Activated CD4-positive, alpha-beta T cell treated with anti-CD3 and anti-CD28 coated beads for 36 hours (primary cell): ENCODE measurements at regions of chr3 and their contacts with region 1.

Region 1: GRCh38 chr3:105827959-105828358 is 40.9 kb downstream of the CBLB start:
- DNase-seq: peak; percentile 36
- ATAC-seq: no peak
- H3K4me3 Mint-ChIP-seq: peak overlapping the region; percentile 57
- H3K27ac Mint-ChIP-seq: peak overlapping the region; percentile 100
- H3K4me1 Mint-ChIP-seq: peaks cover 88% of the 10 kb centered on the region
- H3K27me3 Mint-ChIP-seq: no peaks in the 10 kb centered on the region

Region 2: DNA sequence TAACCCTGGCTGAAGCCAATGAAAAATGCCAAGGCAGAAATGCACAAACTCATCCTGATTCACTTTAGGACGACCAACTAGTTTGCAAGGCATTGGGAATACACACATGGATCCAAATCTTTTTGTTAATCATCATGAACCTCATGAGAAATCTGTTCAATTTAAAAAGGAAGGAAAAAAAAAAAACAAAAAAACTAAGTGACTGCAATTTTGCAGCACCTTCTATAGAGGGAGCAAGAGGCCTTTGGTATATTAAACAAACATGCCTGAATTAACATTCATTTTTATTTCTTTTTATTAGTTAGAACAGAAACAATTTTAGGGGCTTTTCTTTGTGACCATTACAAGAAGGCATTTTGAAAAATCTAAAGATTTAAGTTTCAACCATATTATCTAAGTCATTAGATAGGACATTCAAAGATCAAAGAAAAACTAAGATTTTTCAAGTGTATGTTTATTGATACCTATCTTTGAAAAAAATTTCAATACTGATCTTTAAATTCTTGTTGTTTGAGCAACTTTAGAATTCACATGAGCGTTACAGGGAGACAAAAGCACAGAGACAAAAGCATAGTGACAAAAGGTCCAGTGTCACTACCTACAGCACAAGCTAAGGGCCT is 141.6 kb before region 1 on chr3:
- CTCF ChIA-PET with region 1: no interaction called
- POLR2A ChIA-PET with region 1: no interaction called
- intact Hi-C with region 1: loop called in 1 of 2 experiments (anchors 5 kb)
- DNase-seq: no peak
- ATAC-seq: no peak
- H3K4me3 Mint-ChIP-seq: no peak overlapping the region
- H3K27ac Mint-ChIP-seq: peak overlapping the region; percentile 42
- H3K4me1 Mint-ChIP-seq: peaks cover 24% of the 10 kb centered on the region
- H3K27me3 Mint-ChIP-seq: no peaks in the 10 kb centered on the region

Region 3: GRCh38 chr3:105752744-105753415 is 75.1 kb before region 1 on chr3:
- CTCF ChIA-PET with region 1: no interaction called
- POLR2A ChIA-PET with region 1: no interaction called
- intact Hi-C with region 1: loop called (anchors 2 kb)
- DNase-seq: peak; percentile 55
- ATAC-seq: peak; percentile 76
- H3K4me3 Mint-ChIP-seq: peak overlapping the region; percentile 42
- H3K27ac Mint-ChIP-seq: peak overlapping the region; percentile 95
- H3K4me1 Mint-ChIP-seq: peaks cover 78% of the 10 kb centered on the region
- H3K27me3 Mint-ChIP-seq: no peaks in the 10 kb centered on the region

Region 4: DNA sequence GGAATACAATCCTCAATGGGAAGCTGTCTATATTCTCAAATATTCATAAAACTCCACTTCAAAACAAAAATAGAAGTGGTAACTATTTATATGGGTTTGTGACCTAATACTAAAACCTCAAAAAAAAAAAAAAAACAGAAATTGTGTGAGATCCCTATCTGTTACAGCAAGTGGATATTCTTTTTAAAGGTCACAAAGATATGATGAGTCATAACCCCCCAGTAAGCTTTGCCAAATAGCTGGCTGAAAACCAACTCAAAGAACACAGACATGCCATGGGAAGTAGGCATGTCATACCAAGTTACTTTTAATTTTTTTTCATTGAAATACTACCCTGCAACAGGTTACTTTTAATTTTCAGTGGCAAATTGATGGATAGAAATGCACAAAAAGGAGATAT is 21.6 kb before region 1 on chr3:
- CTCF ChIA-PET with region 1: no interaction called
- POLR2A ChIA-PET with region 1: interaction called, 3 read pairs
- intact Hi-C with region 1: loop called in 1 of 2 experiments (anchors 2 kb)
- DNase-seq: no peak
- ATAC-seq: peak; percentile 82
- H3K4me3 Mint-ChIP-seq: no peak overlapping the region
- H3K27ac Mint-ChIP-seq: peak overlapping the region; percentile 34
- H3K4me1 Mint-ChIP-seq: peaks cover 65% of the 10 kb centered on the region
- H3K27me3 Mint-ChIP-seq: no peaks in the 10 kb centered on the region

Region 5: DNA sequence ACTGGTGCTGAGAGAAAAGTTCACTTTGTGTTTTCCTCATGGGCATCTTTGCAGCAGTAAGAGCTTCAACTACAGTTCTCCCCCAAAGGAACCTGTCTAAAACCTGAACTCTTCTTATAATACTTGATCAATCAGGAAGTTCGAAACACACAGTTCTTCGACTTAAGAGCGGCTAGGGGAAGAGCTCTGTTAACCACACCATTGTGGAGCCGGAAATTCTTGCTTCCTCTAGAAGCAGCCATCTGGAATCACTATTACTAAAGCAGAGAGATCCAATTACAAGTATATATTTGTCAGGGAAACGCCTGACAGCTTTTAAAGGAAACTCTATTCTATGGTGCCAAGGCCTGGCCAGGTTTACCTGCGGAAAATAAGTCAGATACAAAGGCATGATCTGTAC is 378.2 kb after region 1 on chr3:
- CTCF ChIA-PET with region 1: no interaction called
- POLR2A ChIA-PET with region 1: no interaction called
- intact Hi-C with region 1: loop called (anchors 1 to 5 kb)
- DNase-seq: peak; percentile 31
- ATAC-seq: peak; percentile 67
- H3K4me3 Mint-ChIP-seq: peak overlapping the region; percentile 65
- H3K27ac Mint-ChIP-seq: peak overlapping the region; percentile 94
- H3K4me1 Mint-ChIP-seq: peaks cover 50% of the 10 kb centered on the region
- H3K27me3 Mint-ChIP-seq: no peaks in the 10 kb centered on the region

Region 6: DNA sequence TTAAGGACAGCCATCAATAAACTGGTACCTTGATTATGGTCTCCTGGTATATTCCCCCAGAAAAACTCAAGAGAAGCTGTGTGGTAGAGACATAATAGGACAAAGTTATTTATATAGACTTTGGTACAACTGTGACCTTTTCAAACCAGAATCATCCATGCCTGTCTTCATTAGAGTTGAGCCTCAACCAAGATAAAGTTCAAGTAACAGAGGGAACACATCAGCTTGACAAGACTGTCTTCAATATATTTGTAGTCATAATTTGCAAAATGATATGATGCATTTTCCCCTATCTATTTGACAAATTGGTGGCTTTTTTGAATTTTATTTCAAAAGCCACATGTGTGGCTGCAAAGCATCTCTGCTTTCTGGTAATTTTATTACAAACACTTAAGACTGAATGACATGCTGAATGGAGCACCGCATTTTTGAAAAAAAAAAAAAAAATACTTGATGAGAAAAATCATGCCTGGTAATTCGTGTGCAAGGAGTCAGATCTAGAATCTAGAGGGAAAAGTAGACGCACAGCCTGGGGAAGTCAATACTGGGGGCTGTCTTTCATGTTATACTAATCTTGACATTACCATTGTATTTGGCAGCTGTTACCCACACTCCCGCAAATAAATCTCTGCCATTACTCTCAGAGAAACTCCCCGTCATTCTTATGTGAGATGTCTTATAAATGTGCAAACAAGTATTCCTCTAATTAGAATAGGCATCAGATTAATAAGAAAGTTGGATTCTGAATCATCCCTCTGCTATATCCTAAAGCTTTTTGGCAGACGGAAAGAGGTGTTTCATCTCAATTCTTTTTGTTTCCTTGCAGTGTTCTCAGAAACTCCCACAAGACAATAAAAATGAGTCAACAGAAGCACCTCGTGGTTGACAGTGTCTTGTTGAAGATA is 595.6 kb after region 1 on chr3:
- CTCF ChIA-PET with region 1: no interaction called
- POLR2A ChIA-PET with region 1: interaction called, 6 read pairs
- intact Hi-C with region 1: loop called (anchors 1 to 2 kb)
- DNase-seq: peak; percentile 59
- ATAC-seq: peak; percentile 70
- H3K4me3 Mint-ChIP-seq: peak overlapping the region; percentile 47
- H3K27ac Mint-ChIP-seq: peak overlapping the region; percentile 93
- H3K4me1 Mint-ChIP-seq: peaks cover 60% of the 10 kb centered on the region
- H3K27me3 Mint-ChIP-seq: no peaks in the 10 kb centered on the region

Region 7: GRCh38 chr3:106473576-106474475 is 645.9 kb after region 1 on chr3:
- CTCF ChIA-PET with region 1: no interaction called
- POLR2A ChIA-PET with region 1: no interaction called
- intact Hi-C with region 1: loop called in 1 of 2 experiments (anchors 1 kb)
- DNase-seq: peak; percentile 47
- ATAC-seq: peak; percentile 86
- H3K4me3 Mint-ChIP-seq: no peak overlapping the region
- H3K27ac Mint-ChIP-seq: peak overlapping the region; percentile 88
- H3K4me1 Mint-ChIP-seq: peaks cover 28% of the 10 kb centered on the region
- H3K27me3 Mint-ChIP-seq: no peaks in the 10 kb centered on the region